Activated T-helper 1 cell treated with anti-CD3 and anti-CD28 coated beads, Interleukin-12 subunit alpha, Interleukin-12 subunit beta, Interleukin-2, Interleukin-4 antibody, amounts not matched to agents 30 ng/mL and 10 ng/mL and 1 ng/mL, durations not matched to agents 14 hours and 24 hours and 36 hours (primary cell): ENCODE measurements at regions of chr7 and their contacts with region 1.

Region 1: DNA sequence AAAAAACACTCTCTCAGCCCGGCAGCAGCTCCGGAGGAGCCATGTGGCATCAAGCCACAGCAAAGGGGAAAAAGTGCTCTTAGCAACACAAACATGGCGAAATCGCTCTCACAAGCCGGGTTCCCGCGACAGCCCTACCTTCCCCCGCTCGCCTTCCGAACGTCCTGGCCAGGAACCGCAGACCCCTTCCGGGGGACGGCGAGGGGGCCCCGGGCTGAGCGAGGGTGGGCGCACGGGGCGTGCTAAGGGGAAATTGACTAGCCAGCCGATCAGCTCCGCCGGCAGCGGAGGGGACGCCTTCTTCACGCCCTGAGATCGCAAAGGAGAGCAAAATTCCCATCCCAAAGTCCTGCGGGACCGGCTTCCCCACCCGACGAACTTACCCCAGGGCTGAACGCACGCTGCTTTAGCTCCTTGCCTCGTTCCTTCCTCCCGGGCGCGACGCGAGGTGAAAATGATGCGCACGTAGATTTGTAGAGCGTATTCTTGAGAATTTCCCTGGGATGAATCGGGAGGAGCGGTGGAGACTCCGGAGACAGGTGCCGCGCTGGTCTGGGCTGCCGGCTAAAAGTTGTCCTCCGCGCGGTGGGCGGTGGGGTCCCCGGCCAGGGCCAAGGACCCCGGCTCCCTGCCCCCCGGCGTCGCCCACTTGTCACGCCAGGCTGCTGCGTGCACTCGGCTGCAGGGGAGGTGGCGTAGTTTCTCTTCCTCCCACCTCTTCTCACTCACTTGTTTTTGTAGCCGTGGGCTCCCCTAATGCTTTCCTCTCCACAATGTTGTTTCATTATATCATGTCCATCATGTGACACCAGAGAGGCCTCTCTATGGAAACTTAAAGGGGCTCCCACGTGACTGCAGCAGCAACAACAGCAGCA is 220.1 kb upstream of the MKLN1 start:
- DNase-seq: peak; percentile 75
- H3K4me3 Mint-ChIP-seq: peak overlapping the region; percentile 99
- H3K27ac Mint-ChIP-seq: peak overlapping the region; percentile 100
- H3K4me1 Mint-ChIP-seq: peaks cover 65% of the 10 kb centered on the region
- H3K27me3 Mint-ChIP-seq: no peaks in the 10 kb centered on the region

Region 2: DNA sequence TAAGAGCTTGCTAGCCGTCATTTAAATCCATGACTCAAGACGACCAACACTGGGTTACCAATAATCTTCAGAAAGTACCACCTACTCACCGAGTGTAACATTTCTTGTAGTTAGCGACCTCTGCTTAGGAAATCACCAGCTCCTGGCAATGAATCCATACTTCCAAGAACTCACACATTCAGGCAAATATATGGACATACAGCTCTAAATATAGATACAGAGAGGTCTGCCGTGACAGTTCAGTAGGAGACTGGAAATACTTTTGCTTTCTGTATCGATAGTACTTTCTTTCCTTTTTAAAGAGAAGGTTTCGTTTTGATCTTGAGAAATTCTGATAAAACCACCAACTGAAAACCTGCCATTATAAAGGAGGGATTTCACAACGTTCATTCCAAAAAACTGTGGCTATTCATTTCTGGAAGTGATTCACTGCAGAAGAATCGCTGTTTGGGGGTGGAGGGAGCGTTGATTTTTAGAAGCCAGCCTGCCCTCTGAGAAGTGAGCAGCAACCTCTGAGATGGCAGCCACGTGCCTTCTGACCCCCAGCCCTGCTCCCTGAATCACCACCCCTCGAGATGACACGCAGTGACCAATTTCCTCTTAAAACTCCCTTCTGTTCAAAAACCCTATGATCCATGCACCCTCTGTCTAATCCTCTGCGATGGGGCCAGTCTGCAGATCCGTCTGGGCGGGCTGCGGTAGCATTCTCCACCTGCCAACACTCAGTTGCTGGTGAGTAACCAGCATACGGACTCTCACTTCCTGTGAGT is 194.5 kb before region 1 on chr7:
- intact Hi-C with region 1: loop called (anchors 1 kb)
- DNase-seq: peak; percentile 79
- H3K4me3 Mint-ChIP-seq: peak overlapping the region; percentile 77
- H3K27ac Mint-ChIP-seq: peak overlapping the region; percentile 92
- H3K4me1 Mint-ChIP-seq: peaks cover 93% of the 10 kb centered on the region
- H3K27me3 Mint-ChIP-seq: no peaks in the 10 kb centered on the region

Region 3: DNA sequence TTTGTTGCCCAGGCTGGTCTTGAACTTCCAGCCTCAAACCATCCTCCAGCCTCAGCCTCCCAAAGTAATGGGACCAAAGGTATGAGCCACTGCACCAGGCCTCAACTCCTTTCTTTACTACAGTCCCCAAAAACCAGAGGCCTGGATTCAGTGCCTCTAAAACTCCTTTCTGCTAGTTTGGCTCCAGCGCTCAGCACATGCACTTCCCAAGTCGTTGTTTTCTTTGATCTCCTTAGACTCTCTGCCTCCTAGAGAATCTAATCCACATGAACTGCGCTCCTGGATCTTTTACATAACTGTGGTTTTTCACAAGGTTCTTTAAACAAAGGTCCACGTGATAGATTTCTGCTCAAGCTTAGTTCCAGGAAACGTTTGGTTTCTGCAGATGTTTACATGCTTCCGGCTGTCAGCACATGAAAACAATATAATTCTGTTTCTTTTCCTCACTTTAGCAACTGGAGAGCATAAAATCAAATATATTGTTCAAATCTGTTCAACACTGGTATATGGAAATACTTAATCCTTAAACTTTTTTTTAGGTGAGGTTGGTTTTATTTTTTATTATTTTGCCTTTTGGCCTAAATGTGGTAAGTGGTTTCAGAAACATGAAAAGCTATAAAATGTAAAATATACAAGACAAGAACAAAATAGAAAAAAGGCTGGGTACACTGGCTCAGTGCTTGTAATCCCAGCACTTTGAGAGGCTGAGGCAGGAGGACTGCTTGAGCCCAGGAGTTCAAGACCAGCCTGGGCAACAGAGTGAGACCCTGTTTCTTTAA is 50.4 kb before region 1 on chr7:
- intact Hi-C with region 1: loop called (anchors 1 kb)
- DNase-seq: peak; percentile 47
- H3K4me3 Mint-ChIP-seq: peak overlapping the region; percentile 78
- H3K27ac Mint-ChIP-seq: peak overlapping the region; percentile 80
- H3K4me1 Mint-ChIP-seq: peaks cover 52% of the 10 kb centered on the region
- H3K27me3 Mint-ChIP-seq: no peaks in the 10 kb centered on the region

Region 4: GRCh38 chr7:131188367-131189339 is 81.1 kb after region 1 on chr7:
- intact Hi-C with region 1: loop called (anchors 1 kb)
- DNase-seq: peak; percentile 59
- H3K4me3 Mint-ChIP-seq: peak overlapping the region; percentile 52
- H3K27ac Mint-ChIP-seq: peak overlapping the region; percentile 91
- H3K4me1 Mint-ChIP-seq: peaks cover 59% of the 10 kb centered on the region
- H3K27me3 Mint-ChIP-seq: no peaks in the 10 kb centered on the region

Region 5: GRCh38 chr7:131383417-131384285 is 276.1 kb after region 1 on chr7:
- intact Hi-C with region 1: loop called (anchors 5 kb)
- DNase-seq: no peak
- H3K4me3 Mint-ChIP-seq: no peak overlapping the region
- H3K27ac Mint-ChIP-seq: no peak overlapping the region
- H3K4me1 Mint-ChIP-seq: peaks cover 23% of the 10 kb centered on the region
- H3K27me3 Mint-ChIP-seq: no peaks in the 10 kb centered on the region